GM18951 (cell line): ENCODE measurements at regions of chr20 and their contacts with region 1.

Region 1: GRCh38 chr20:48904365-48905296 is 16.9 kb upstream of the ARFGEF2 start:
- POLR2A ChIP-seq: no peak

Region 2: DNA sequence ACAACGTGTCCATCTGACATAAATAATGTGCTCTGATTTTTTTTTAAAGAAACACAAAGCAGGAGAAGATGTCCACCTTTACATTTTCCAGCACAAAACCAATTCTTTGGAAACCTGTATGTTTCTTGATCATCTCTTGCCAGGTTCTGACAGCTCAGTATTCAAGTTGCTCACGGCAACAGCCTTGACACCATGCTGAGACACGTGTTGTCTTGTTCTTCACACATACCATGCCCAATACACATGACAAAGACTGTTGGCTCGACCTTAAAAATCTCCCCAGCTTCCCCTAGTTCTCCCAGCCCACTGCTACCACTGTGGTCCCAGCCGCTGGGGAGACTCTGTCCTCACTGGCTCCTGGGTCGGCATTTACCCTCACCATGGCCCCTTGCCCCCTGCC is 595.7 kb before region 1 on chr20:
- in situ Hi-C with region 1: no loop called
- POLR2A ChIP-seq: no peak

Region 3: DNA sequence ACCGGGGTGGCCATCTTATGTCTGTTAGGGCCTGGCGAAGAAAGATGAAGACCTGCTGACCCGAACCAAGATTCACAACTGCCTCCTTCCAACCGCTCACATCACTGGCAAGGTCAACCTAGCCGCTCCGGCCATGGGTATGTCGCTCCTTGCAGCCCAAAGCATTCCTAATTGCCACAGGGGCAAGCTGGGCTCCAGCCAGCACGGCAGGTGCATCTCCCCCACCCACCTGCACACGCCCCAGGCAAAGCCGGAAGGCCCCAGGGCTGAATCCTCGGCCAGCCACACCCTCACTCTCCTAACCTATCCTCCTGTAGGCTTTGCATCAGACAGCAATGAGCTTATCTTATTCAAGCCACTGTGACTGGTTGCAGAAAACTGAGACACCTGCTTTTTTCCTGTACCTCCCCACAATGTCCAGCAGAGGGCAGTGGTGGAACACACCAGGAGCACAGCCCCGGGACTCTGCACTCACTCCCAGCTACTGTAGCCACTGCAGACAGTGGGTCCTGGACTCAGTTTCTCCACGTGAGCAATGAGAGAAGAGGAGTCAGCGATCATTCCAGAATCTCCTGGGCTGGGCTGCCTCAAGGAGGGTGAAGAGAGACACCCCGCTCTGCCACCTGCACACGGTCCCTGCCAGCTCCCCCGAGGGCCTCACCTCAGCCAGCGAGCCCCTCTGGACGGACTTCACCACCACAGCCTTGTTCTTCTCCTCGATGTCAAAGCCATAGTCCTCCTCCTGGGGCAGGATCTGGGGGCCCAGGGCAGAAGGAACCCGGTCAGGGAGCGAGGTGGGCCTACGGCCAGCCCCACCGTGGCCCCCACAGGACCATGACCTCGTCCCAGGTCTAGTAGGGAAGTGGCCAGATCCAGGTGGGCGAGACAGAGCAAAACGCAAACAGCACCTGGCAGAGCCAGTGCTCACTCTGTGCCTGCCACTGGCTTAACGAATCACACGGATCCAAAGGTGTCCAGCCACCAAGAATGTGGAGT is 246.9 kb before region 1 on chr20:
- in situ Hi-C with region 1: loop called (anchors 5 kb)
- POLR2A ChIP-seq: no peak